CD4-positive, alpha-beta T cell (primary cell): ENCODE measurements at regions of chrX and their contacts with region 1.

Region 1: DNA sequence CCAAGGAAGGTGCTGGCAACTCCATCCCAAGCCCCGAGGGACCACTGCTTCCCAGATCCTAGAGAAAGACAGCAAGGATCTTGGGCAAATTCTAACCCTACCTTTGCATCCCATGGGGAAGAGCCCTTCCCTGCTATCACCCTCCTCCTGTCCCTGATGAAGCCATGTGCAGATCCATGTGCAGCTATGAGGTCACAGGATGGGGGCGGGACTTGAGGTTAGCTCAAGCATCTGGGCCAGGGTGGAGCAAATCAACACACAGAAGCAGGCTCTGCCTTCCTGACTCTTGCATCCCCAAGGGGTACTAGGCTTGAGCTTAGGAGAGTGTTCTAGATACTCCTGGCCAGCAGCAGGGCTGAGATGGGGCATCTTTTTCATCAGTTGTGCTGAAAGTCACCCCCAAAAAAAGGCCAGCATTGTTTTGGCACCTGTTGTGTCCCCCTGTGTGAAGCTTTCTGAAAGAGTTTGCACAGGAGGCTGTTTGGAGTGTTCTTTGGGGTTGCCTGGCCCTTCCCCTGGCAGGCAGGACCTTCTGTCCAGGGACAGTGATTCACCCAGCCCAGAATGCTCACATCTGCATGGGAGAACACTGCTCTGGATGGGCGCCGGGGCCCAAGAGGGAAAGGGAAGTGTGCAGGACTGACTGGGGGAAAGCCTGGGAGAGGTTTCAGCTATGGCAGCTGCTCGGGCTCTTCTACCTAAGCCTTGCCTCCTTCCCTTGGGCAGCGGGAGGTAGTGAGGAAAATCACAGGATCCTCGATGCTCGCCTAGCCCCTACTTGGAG is 50.8 kb downstream of the PRPS1 start:
- DNase-seq: peak; percentile 55 to 87 (median 68)
- ATAC-seq: peak; percentile 62
- H3K4me3 ChIP-seq: no peak overlapping the region
- H3K4me3 Mint-ChIP-seq: peak overlapping the region; percentile 86
- H3K27ac ChIP-seq: peak overlapping the region; percentile 51 to 60
- H3K27ac Mint-ChIP-seq: peak overlapping the region; percentile 99
- H3K4me1 ChIP-seq: peaks cover 76% of the 10 kb centered on the region
- H3K4me1 Mint-ChIP-seq: peaks cover 78% of the 10 kb centered on the region
- H3K27me3 ChIP-seq: no peaks in the 10 kb centered on the region
- H3K27me3 Mint-ChIP-seq: no peaks in the 10 kb centered on the region
- CTCF ChIP-seq: no peak

Region 2: DNA sequence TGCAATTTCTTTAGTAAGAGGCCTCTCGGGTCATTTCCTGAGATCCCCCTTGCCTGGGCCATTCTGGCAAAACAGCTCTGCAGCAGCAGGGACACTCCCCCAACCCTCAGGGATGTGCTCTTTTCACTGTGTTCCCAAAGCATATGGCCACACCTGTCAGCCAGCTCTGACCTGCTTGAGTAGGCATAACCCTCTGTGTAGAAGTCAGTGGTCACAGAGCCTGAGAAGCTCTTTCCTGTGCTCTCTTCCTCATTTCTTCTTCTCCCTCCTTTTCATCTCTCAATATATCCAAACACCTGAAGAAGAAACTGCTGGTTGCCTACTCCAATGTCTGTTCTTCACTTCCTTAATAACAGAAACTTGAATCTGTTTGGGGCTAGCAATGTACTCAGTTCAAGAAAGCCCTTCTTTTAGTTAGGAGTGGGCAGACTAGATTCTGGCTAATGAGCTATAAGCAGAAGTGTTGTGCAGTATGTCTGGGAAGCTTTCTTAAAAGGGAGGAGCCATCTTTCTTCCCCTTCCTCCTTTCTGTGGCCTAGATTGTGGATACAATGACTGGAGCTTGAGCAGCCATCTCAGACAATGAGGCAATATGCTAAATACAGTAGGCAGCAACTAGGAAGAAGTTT is 22.5 kb after region 1 on chrX:
- CTCF ChIA-PET with region 1: no interaction called
- POLR2A ChIA-PET with region 1: interaction called, 754 read pairs
- intact Hi-C with region 1: loop called in 1 of 2 experiments (anchors 2 kb)
- DNase-seq: peak in 2 of 14 experiments; percentile 29 to 46
- ATAC-seq: no peak
- H3K4me3 ChIP-seq: no peak overlapping the region
- H3K4me3 Mint-ChIP-seq: no peak overlapping the region
- H3K27ac ChIP-seq: no peak overlapping the region
- H3K27ac Mint-ChIP-seq: no peak overlapping the region
- H3K4me1 ChIP-seq: peaks cover 9% of the 10 kb centered on the region
- H3K4me1 Mint-ChIP-seq: peaks cover 21% of the 10 kb centered on the region
- H3K27me3 ChIP-seq: no peaks in the 10 kb centered on the region
- H3K27me3 Mint-ChIP-seq: no peaks in the 10 kb centered on the region
- CTCF ChIP-seq: no peak

Region 3: DNA sequence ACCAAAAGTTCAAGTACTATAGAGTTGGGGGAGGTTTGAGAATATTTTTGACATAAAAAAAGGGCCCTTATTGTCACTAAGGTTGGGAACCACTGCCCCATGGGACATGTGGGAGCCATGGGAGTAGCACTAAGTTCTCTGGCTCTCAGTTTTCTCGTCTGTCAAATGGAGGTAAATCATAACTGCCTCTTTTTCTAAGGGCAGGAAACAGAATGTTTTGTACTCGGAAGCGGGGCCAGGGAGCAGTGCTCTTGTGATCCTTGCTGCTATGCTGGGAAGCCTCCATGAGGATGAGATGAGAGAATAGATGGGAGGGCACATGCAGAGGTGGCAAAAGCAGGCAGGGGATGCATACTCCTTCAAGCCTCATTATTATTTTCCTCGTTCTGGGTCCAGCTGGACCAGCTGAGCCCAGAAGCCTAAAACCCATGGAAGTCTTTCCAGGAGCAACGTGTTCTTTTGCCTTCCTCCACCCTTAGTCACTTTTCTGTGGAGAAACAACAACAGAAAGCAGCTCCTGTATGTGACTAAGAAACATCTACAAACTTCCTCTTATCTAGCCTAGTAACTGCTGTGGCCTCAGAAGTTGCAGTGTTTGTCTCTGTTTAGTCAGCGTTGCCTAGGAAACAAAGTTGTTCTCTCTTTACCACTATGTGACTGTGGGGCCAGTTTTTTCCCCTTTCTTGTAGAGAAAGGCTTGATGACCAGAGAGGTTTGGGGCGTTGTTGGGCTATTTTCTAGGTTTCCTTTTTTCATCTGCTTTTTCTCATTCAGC is 31.7 kb after region 1 on chrX:
- CTCF ChIA-PET with region 1: interaction called, 261 read pairs
- POLR2A ChIA-PET with region 1: interaction called, 754 read pairs
- intact Hi-C with region 1: loop called in 1 of 2 experiments (anchors 1 kb)
- DNase-seq: peak in 11 of 14 experiments; percentile 16 to 94 (median 43)
- ATAC-seq: peak; percentile 36
- H3K4me3 ChIP-seq: peak overlapping the region; percentile 21
- H3K4me3 Mint-ChIP-seq: peak overlapping the region; percentile 97
- H3K27ac ChIP-seq: peak overlapping the region; percentile 90 to 95
- H3K27ac Mint-ChIP-seq: peak overlapping the region; percentile 99
- H3K4me1 ChIP-seq: peaks cover 65% of the 10 kb centered on the region
- H3K4me1 Mint-ChIP-seq: peaks cover 68% of the 10 kb centered on the region
- H3K27me3 ChIP-seq: no peaks in the 10 kb centered on the region
- H3K27me3 Mint-ChIP-seq: no peaks in the 10 kb centered on the region
- CTCF ChIP-seq: no peak

Region 4: GRCh38 chrX:108020631-108021030 is 341.5 kb after region 1 on chrX:
- CTCF ChIA-PET with region 1: no interaction called
- POLR2A ChIA-PET with region 1: no interaction called
- intact Hi-C with region 1: no loop called
- DNase-seq: peak in 6 of 14 experiments; percentile 5 to 56 (median 34)
- ATAC-seq: no peak
- H3K4me3 ChIP-seq: peak overlapping the region; percentile 62
- H3K4me3 Mint-ChIP-seq: peak overlapping the region; percentile 83
- H3K27ac ChIP-seq: peak overlapping the region; percentile 35 to 77
- H3K27ac Mint-ChIP-seq: peak overlapping the region; percentile 100
- H3K4me1 ChIP-seq: peaks cover 34% of the 10 kb centered on the region
- H3K4me1 Mint-ChIP-seq: peaks cover 91% of the 10 kb centered on the region
- H3K27me3 ChIP-seq: no peaks in the 10 kb centered on the region
- H3K27me3 Mint-ChIP-seq: no peaks in the 10 kb centered on the region
- CTCF ChIP-seq: peak; percentile 65